ENCODE measurements at regions of chr5 and their contacts with region 1.

Region 1: DNA sequence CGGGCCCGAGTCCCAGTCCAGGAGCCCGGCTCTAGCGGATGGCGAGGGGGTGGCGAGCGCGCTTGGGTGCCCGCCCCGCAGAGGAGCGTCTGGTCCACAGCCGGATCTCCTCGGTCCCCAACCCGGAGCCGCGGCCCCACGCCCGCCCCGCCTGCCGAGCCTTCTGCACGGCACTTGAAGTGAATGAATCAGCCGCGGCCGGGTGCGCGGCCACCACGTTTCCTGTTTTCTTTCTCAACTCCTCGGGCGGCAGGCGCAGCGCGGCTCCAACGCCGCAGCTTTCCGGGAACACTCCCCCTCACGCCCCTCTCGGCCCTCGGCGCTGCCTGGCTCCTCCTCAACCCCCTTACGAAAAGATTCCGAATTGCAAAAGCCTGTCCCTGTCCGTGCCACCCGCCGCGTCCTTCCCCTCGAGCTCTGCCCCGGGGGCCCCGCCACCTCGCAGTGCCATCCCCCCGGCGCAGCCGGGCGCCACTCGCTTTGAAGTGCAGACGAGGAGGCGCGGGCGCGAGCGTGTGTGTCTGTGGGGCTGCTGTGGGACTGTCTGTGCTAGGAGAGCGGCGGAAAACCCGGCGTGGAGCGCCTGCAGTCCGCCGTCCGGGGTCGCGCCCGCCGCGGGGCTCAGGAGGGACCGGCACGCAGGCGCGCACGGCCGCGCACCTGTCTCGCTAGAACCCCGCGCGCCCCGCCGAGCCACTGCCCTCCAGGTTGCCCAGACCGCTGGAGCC is 456.6 kb downstream of the RAB3C start:
- DNase-seq: peak; percentile 88
- H3K4me3 Mint-ChIP-seq: peak overlapping the region; percentile 88
- H3K27ac Mint-ChIP-seq: peak overlapping the region; percentile 95
- H3K4me1 Mint-ChIP-seq: peaks cover 50% of the 10 kb centered on the region
- H3K27me3 Mint-ChIP-seq: no peaks in the 10 kb centered on the region

Region 2: GRCh38 chr5:58460732-58461286 is 578.7 kb before region 1 on chr5:
- intact Hi-C with region 1: loop called (anchors 5 kb)
- DNase-seq: peak; percentile 85
- H3K4me3 Mint-ChIP-seq: peak overlapping the region; percentile 74
- H3K27ac Mint-ChIP-seq: peak overlapping the region; percentile 5
- H3K4me1 Mint-ChIP-seq: peaks cover 17% of the 10 kb centered on the region
- H3K27me3 Mint-ChIP-seq: peaks cover 21% of the 10 kb centered on the region

Region 3: GRCh38 chr5:58999804-59000595 is 39.5 kb before region 1 on chr5:
- intact Hi-C with region 1: no loop called
- DNase-seq: no peak
- H3K4me3 Mint-ChIP-seq: no peak overlapping the region
- H3K27ac Mint-ChIP-seq: peak overlapping the region; percentile 1
- H3K4me1 Mint-ChIP-seq: peaks cover 44% of the 10 kb centered on the region
- H3K27me3 Mint-ChIP-seq: no peaks in the 10 kb centered on the region

Region 4: GRCh38 chr5:59099270-59099994 is 60.0 kb after region 1 on chr5:
- intact Hi-C with region 1: loop called (anchors 1 kb)
- DNase-seq: peak; percentile 62
- H3K4me3 Mint-ChIP-seq: peak overlapping the region; percentile 22
- H3K27ac Mint-ChIP-seq: peak overlapping the region; percentile 85
- H3K4me1 Mint-ChIP-seq: peaks cover 80% of the 10 kb centered on the region
- H3K27me3 Mint-ChIP-seq: no peaks in the 10 kb centered on the region

Region 5: GRCh38 chr5:59174248-59174844 is 134.9 kb after region 1 on chr5:
- intact Hi-C with region 1: loop called (anchors 1 kb)
- DNase-seq: no peak
- H3K4me3 Mint-ChIP-seq: no peak overlapping the region
- H3K27ac Mint-ChIP-seq: no peak overlapping the region
- H3K4me1 Mint-ChIP-seq: peaks cover 43% of the 10 kb centered on the region
- H3K27me3 Mint-ChIP-seq: no peaks in the 10 kb centered on the region

Region 6: DNA sequence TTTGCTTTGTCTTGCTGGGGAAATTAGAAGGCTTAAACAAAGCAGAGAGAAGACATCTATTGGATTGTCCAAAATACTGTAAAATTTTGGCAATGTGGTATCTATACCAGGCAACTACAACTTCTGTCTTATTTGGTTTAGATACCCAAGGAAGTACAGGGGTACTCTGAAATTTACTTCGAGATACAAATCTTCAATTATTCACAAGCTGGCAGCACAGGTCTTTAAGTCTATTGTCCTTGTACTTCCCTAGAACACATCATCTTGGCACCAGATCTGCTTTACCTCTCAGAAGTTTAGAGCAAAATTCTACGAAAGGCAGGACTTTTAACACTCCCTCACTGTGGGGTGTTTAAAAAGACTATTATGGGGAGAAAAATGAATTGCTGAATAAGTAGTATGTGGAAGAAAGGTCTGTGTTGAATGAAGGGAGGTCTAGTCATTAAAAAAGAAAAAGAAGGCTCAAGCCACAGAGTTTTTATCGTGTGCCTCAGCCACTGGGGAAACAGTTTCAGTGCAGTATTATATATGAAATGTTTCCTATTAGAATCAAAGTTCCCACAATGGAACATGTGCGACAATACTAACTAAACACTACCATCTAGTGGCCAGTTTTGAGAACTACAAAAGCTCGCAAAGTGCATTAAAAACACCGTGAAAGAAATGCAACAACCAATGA is 760.3 kb after region 1 on chr5:
- intact Hi-C with region 1: loop called (anchors 10 kb)
- DNase-seq: no peak
- H3K4me3 Mint-ChIP-seq: no peak overlapping the region
- H3K27ac Mint-ChIP-seq: no peak overlapping the region
- H3K4me1 Mint-ChIP-seq: peaks cover 4% of the 10 kb centered on the region
- H3K27me3 Mint-ChIP-seq: peaks cover 10% of the 10 kb centered on the region

Measured in activated T-helper 2 cell treated with anti-CD3 and anti-CD28 coated beads, Interferon-gamma antibody, Interleukin-2, Interleukin-4, amounts not matched to agents 10 μg/mL and 5 μg/mL and 100 μg/mL, durations not matched to agents 14 hours and 24 hours and 36 hours (primary cell).